MCF 10A (cell line): ENCODE measurements at regions of chr1 and their contacts with region 1.

Region 1: GRCh38 chr1:155105604-155106022 is 22.1 kb upstream of the EFNA1 start:
- DNase-seq: peak; percentile 26
- H3K4me3 Mint-ChIP-seq: no peak overlapping the region
- H3K27ac Mint-ChIP-seq: peak overlapping the region; percentile 4
- H3K4me1 Mint-ChIP-seq: peaks cover 18% of the 10 kb centered on the region
- H3K27me3 Mint-ChIP-seq: no peaks in the 10 kb centered on the region
- CTCF ChIP-seq: no peak

Region 2: DNA sequence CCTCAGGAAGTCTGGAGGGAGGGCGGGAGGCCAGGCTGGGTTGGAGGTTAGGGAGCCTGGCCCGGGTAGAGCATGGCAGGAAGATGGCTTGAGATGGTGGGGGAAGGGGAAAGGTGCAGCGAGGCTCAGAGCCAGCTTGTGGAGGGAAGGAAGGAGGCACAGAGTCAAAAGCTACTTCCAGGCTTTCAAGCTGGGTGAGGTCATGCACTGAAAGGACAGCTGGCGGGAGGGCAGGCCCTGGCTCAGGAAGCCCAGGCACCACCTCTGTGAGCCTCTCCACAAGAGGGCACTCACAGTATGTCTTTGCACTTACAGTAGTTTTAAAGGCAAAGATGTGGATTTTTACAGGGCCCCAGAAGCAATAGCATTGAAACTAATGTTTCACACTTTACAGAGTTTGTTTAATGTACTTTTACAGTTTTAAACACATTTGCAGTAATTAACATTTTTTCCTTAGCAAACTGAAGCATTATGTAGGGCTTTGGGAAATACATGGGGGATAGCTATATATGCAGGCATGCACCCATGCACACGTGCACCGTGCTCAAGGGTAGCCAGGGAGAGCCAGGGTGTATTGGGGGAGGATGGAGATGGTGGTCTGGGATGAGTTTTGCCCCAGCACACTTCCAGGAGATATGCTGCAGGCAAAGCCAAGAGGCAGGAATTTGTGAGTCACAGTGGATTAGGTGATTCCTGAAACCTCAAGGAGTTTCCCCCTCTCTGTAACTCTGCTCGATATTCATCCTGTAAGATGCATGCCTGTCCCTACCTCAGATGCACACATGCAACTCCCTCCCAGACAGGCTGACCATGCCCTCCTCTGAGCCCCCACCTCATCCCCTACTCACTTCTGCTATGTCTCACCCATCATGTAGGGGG is 60.6 kb before region 1 on chr1:
- CTCF ChIA-PET with region 1: no interaction called
- POLR2A ChIA-PET with region 1: no interaction called
- intact Hi-C with region 1: no loop called
- DNase-seq: peak; percentile 90
- H3K4me3 Mint-ChIP-seq: no peak overlapping the region
- H3K27ac Mint-ChIP-seq: no peak overlapping the region
- H3K4me1 Mint-ChIP-seq: peaks cover 37% of the 10 kb centered on the region
- H3K27me3 Mint-ChIP-seq: no peaks in the 10 kb centered on the region
- CTCF ChIP-seq: peak; percentile 83

Region 3: GRCh38 chr1:155063550-155064110 is 42.0 kb before region 1 on chr1 and contains the start of gene EFNA4:
- CTCF ChIA-PET with region 1: no interaction called
- POLR2A ChIA-PET with region 1: no interaction called
- intact Hi-C with region 1: no loop called
- DNase-seq: peak; percentile 96
- H3K4me3 Mint-ChIP-seq: peak within 1 kb of the TSS; percentile 81
- H3K27ac Mint-ChIP-seq: peak within 1 kb of the TSS; percentile 3
- H3K4me1 Mint-ChIP-seq: peaks cover 31% of the 10 kb centered on the region
- H3K27me3 Mint-ChIP-seq: no peaks in the 10 kb centered on the region
- CTCF ChIP-seq: no peak
- total RNA-seq, gene EFNA4: 7.4 and 9.5 TPM in 2 replicates

Region 4: GRCh38 chr1:155127105-155127964 is 21.7 kb after region 1 on chr1 and contains the start of gene EFNA1:
- CTCF ChIA-PET with region 1: interaction called, 4 read pairs
- POLR2A ChIA-PET with region 1: interaction called, 29 read pairs
- intact Hi-C with region 1: no loop called
- DNase-seq: peak; percentile 99
- H3K4me3 Mint-ChIP-seq: peak within 1 kb of the TSS; percentile 100
- H3K27ac Mint-ChIP-seq: peak within 1 kb of the TSS; percentile 90
- H3K4me1 Mint-ChIP-seq: peaks cover 60% of the 10 kb centered on the region
- H3K27me3 Mint-ChIP-seq: no peaks in the 10 kb centered on the region
- CTCF ChIP-seq: no peak
- total RNA-seq, gene EFNA1: 38.9 and 42.3 TPM in 2 replicates

Region 5: GRCh38 chr1:155135415-155136028 is 29.9 kb after region 1 on chr1 and contains the start of gene SLC50A1:
- CTCF ChIA-PET with region 1: interaction called, 4 read pairs
- POLR2A ChIA-PET with region 1: interaction called, 10 read pairs
- intact Hi-C with region 1: no loop called
- DNase-seq: peak; percentile 94
- H3K4me3 Mint-ChIP-seq: peak within 1 kb of the TSS; percentile 80
- H3K27ac Mint-ChIP-seq: peak within 1 kb of the TSS; percentile 94
- H3K4me1 Mint-ChIP-seq: peaks cover 50% of the 10 kb centered on the region
- H3K27me3 Mint-ChIP-seq: no peaks in the 10 kb centered on the region
- CTCF ChIP-seq: no peak
- total RNA-seq, gene SLC50A1: 91.2 and 97.8 TPM in 2 replicates